Activated T-helper 1 cell treated with anti-CD3 and anti-CD28 coated beads, Interleukin-12 subunit alpha, Interleukin-12 subunit beta, Interleukin-2, Interleukin-4 antibody, amounts not matched to agents 30 ng/mL and 10 ng/mL and 1 ng/mL, durations not matched to agents 14 hours and 24 hours and 36 hours (primary cell): ENCODE measurements at regions of chr2 and their contacts with region 1.

Region 1: DNA sequence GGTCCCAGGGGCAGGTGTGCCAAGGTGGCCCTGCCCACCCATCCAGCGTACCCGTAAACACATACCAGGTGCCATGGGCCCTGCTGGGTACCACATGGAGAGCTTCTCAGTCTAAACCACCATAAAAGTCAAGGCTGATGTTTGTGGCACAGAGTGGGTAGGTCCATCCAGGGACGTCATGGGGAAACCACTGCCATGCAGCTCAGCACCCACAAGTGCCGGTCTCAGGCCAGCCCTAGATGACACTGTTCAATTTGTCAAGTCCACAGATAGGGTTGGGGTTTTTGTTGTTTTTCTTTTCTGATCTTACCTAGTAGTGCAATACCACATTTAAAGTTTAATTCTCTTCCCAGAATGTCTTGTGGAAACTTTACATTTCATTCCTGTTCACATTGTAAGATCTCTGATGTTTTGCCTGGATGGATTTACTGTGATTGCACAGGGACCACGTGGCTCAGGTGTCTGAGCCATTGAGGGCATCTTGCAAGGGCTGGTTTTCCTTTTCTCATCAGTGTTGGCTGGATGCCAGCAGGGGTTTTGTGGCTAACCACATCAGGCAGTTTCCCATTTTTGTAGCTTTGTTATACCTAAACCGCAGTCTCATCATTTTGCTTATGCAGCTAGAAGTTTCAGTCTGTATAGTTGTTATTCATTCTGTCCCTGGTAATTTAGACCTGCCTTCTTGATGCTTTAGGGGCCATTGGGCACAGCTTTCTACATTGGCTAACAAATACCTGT is 64.7 kb downstream of the STK25 start:
- DNase-seq: peak; percentile 83
- H3K4me3 Mint-ChIP-seq: peak overlapping the region; percentile 55
- H3K27ac Mint-ChIP-seq: peak overlapping the region; percentile 93
- H3K4me1 Mint-ChIP-seq: peaks cover 32% of the 10 kb centered on the region
- H3K27me3 Mint-ChIP-seq: peaks cover 30% of the 10 kb centered on the region

Region 2: GRCh38 chr2:241271641-241272297 is 171.9 kb before region 1 on chr2:
- intact Hi-C with region 1: loop called (anchors 5 kb)
- DNase-seq: peak; percentile 47
- H3K4me3 Mint-ChIP-seq: peak overlapping the region; percentile 92
- H3K27ac Mint-ChIP-seq: peak overlapping the region; percentile 86
- H3K4me1 Mint-ChIP-seq: peaks cover 29% of the 10 kb centered on the region
- H3K27me3 Mint-ChIP-seq: no peaks in the 10 kb centered on the region

Region 3: DNA sequence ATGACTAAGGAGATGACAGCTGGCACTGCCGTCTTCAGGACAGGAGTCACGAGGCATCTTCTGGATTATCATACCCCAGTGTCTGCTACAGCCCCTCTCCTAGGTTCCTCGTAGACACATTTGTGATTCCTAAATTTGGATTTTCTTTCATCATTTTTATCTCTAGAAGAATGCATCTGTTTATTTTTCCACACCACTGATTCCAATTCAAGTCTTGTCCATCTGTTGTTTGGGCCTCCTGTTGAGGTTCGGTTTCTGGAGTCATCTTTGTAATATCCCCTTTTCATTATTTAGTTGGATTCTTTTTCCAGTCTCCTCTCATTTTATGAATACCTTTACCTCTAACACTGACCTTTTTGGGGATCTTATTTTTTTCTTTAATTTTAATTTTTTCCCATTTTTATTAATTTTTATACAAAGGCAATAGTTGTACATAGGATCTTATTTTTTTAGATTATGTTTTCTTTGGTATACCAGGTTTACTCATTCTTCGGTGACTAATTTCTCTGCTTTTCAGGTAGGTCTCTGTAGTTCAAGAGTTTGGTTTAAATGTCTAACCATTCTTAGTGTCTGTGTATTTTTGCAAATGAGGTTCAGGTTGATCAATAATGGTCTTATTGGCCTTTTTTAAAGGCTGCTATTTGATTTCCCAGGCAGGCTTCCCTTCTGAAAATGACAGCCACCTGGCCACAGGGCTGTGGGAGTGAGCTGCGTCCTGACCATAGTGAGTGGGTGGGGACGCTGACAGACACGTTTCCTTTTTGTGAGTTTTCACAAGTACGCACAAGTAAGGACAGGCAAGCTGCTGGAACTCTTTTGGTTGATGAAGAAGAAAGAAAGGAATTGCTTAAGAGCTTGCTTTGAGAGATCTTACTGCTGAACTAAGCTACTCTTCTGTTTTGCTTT is 53.1 kb before region 1 on chr2:
- intact Hi-C with region 1: loop called (anchors 1 kb)
- DNase-seq: no peak
- H3K4me3 Mint-ChIP-seq: no peak overlapping the region
- H3K27ac Mint-ChIP-seq: no peak overlapping the region
- H3K4me1 Mint-ChIP-seq: peaks cover 13% of the 10 kb centered on the region
- H3K27me3 Mint-ChIP-seq: no peaks in the 10 kb centered on the region